ENCODE measurements at regions of chr16 and their contacts with region 1.

Region 1: GRCh38 chr16:27374804-27375425 is 27.1 kb upstream of the IL21R start:
- DNase-seq: peak; percentile 90
- ATAC-seq: peak; percentile 72
- H3K4me3 ChIP-seq: peak overlapping the region; percentile 56
- H3K27ac ChIP-seq: peak overlapping the region; percentile 72
- H3K4me1 ChIP-seq: peaks cover 61% of the 10 kb centered on the region
- H3K27me3 ChIP-seq: no peaks in the 10 kb centered on the region
- CTCF ChIP-seq: peak; percentile 39 to 50 (median 42); a peak in 4 of 6 replicates
- EP300 ChIP-seq: no peak
- POLR2A ChIP-seq: peak; percentile 77
- RAD21 ChIP-seq: peak; percentile 37; the same call in 1 of the 2 replicates

Region 2: GRCh38 chr16:27387724-27388123 is 12.8 kb after region 1 on chr16:
- CTCF ChIA-PET with region 1: interaction called, 18 read pairs
- POLR2A ChIA-PET with region 1: interaction called, 26 read pairs
- RAD21 ChIA-PET with region 1: interaction called, 24 read pairs
- SMC1A ChIA-PET with region 1: interaction called, 97 read pairs
- in situ Hi-C with region 1: no loop called
- intact Hi-C with region 1: loop called (anchors 1 kb)
- DNase-seq: peak; percentile 74
- ATAC-seq: peak; percentile 88
- H3K4me3 ChIP-seq: no peak overlapping the region
- H3K27ac ChIP-seq: peak overlapping the region; percentile 54
- H3K4me1 ChIP-seq: peaks cover 37% of the 10 kb centered on the region
- H3K27me3 ChIP-seq: no peaks in the 10 kb centered on the region
- CTCF ChIP-seq: no peak
- EP300 ChIP-seq: peak; percentile 65 to 95; a peak in 2 of 4 replicates
- POLR2A ChIP-seq: no peak
- RAD21 ChIP-seq: no peak

Region 3: GRCh38 chr16:27408012-27408601 is 33.2 kb after region 1 on chr16:
- CTCF ChIA-PET with region 1: interaction called, 20 read pairs
- POLR2A ChIA-PET with region 1: interaction called, 208 read pairs
- RAD21 ChIA-PET with region 1: interaction called, 224 read pairs
- SMC1A ChIA-PET with region 1: interaction called, 220 read pairs
- in situ Hi-C with region 1: no loop called
- intact Hi-C with region 1: no loop called
- DNase-seq: peak; percentile 76
- ATAC-seq: peak; percentile 51
- H3K4me3 ChIP-seq: peak overlapping the region; percentile 86
- H3K27ac ChIP-seq: peak overlapping the region; percentile 97
- H3K4me1 ChIP-seq: peaks cover 28% of the 10 kb centered on the region
- H3K27me3 ChIP-seq: no peaks in the 10 kb centered on the region
- CTCF ChIP-seq: no peak
- EP300 ChIP-seq: peak in 1 of 2 experiments; percentile 11; a peak in 1 of 4 replicates
- POLR2A ChIP-seq: peak; percentile 53; the same call in 1 of the 2 replicates
- RAD21 ChIP-seq: no peak

Region 4: GRCh38 chr16:27449434-27450195 is 74.7 kb after region 1 on chr16:
- CTCF ChIA-PET with region 1: interaction called, 106 read pairs
- POLR2A ChIA-PET with region 1: interaction called, 4 read pairs
- RAD21 ChIA-PET with region 1: interaction called, 25 read pairs
- SMC1A ChIA-PET with region 1: interaction called, 62 read pairs
- in situ Hi-C with region 1: no loop called
- intact Hi-C with region 1: no loop called
- DNase-seq: no peak
- ATAC-seq: peak; percentile 79
- H3K4me3 ChIP-seq: no peak overlapping the region
- H3K27ac ChIP-seq: peak overlapping the region; percentile 66
- H3K4me1 ChIP-seq: peaks cover 57% of the 10 kb centered on the region
- H3K27me3 ChIP-seq: no peaks in the 10 kb centered on the region
- CTCF ChIP-seq: no peak
- EP300 ChIP-seq: peak; percentile 81; a peak in 3 of 4 replicates
- POLR2A ChIP-seq: peak; percentile 76
- RAD21 ChIP-seq: 0 out of 2 replicates have a peak, but pooled peaks have one; percentile 1

Region 5: GRCh38 chr16:27455700-27456099 is 80.8 kb after region 1 on chr16:
- CTCF ChIA-PET with region 1: interaction called, 106 read pairs
- POLR2A ChIA-PET with region 1: interaction called, 4 read pairs
- RAD21 ChIA-PET with region 1: interaction called, 25 read pairs
- SMC1A ChIA-PET with region 1: interaction called, 62 read pairs
- in situ Hi-C with region 1: no loop called
- intact Hi-C with region 1: loop called (anchors 2 kb)
- DNase-seq: no peak
- ATAC-seq: no peak
- H3K4me3 ChIP-seq: no peak overlapping the region
- H3K27ac ChIP-seq: no peak overlapping the region
- H3K4me1 ChIP-seq: peaks cover 25% of the 10 kb centered on the region
- H3K27me3 ChIP-seq: no peaks in the 10 kb centered on the region
- CTCF ChIP-seq: no peak
- EP300 ChIP-seq: no peak
- POLR2A ChIP-seq: 0 out of 2 replicates have a peak, but pooled peaks have one; percentile 36
- RAD21 ChIP-seq: no peak

Measured in GM12878 (cell line).